Spleen (tissue), 13 donors: ENCODE measurements at regions of chr20 and their contacts with region 1.

Region 1: DNA sequence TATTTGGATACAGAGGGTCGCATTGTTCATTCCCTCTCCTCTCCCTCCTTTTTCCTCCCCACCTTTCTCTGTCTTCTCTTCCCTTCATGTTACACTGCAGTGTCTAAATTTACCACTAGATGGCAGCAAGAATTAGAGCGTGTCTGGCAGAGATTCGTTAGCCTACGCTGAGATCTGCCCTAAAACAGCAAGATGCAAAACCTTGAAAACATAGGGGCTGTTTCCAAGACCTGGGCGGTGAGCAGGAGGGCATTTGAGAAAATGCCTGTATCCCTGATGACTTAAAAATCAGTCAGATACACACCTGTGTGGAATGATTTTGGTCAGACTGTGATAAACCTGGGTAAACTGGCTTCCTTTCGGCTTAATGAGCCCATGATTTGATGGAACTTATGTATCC is 101.5 kb upstream of the ISM1 start:
- DNase-seq: no peak
- H3K4me3 ChIP-seq: no peak overlapping the region
- H3K27ac ChIP-seq: no peak overlapping the region
- H3K4me1 ChIP-seq: no peaks in the 10 kb centered on the region
- H3K27me3 ChIP-seq: no peaks in the 10 kb centered on the region
- CTCF ChIP-seq: peak; percentile 65 to 88 (median 80)
- POLR2A ChIP-seq: no peak

Region 2: DNA sequence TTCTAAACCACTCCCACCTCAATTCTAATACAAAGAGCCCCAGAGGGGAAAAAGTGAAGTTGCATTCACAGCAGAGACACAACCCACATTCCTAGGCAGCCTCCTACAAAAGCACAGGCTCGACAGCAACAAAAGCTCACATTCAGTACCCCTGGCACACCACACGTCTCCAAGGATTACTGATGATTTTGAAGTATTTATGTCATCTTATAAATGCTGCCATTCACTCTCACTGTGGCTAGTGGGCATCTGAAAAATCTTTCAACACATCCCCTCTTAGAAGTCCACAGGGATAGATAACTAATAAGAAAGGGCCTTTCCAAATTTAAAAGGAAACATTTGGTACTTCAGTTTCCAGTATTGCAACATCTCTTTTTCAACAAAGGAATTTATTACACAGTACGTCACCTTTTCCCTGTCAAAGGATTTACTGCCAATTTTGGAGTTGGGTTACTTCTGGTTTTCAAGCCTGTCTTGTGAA is 372.5 kb after region 1 on chr20:
- intact Hi-C with region 1: no loop called
- DNase-seq: no peak
- H3K4me3 ChIP-seq: no peak overlapping the region
- H3K27ac ChIP-seq: no peak overlapping the region
- H3K4me1 ChIP-seq: peaks cover 0 to 7% (median 0%) of the 10 kb centered on the region in 6 donors
- H3K27me3 ChIP-seq: no peaks in the 10 kb centered on the region
- CTCF ChIP-seq: no peak
- POLR2A ChIP-seq: no peak

Region 3: DNA sequence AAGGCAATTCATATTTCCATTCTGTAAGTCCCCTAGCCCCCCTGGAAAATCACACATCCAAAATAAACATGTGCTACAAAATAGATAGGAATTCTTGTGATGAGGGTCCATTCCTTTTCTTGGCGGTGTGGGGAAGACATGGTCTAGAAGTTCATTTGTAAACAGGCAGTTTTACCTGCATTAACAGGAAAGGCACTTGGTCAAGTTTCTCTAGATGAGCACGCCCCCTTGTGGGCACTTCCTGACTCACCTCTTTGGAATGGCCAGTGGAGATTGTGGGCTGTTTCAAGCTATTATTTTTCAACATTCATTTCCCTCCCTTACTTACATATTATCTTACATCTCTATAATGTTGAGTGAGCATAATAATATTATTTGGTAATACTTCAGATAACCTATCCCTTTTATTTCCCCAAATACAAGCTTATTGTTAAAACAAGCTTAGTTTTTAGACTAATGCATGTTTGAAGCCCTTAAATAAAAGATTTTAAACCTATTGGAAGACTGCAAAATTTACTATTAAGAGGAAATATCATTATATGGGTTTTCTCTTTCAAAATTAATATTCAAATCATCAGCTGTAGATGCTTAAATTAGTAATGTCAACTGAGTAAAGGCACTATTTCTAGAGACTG is 427.0 kb after region 1 on chr20:
- intact Hi-C with region 1: loop called (anchors 5 kb)
- DNase-seq: peak; percentile 86
- H3K4me3 ChIP-seq: no peak overlapping the region
- H3K27ac ChIP-seq: no peak overlapping the region
- H3K4me1 ChIP-seq: peaks cover 0 to 9% (median 0%) of the 10 kb centered on the region in 6 donors
- H3K27me3 ChIP-seq: no peaks in the 10 kb centered on the region
- CTCF ChIP-seq: peak; percentile 7 to 81 (median 68)
- POLR2A ChIP-seq: no peak

Region 4: DNA sequence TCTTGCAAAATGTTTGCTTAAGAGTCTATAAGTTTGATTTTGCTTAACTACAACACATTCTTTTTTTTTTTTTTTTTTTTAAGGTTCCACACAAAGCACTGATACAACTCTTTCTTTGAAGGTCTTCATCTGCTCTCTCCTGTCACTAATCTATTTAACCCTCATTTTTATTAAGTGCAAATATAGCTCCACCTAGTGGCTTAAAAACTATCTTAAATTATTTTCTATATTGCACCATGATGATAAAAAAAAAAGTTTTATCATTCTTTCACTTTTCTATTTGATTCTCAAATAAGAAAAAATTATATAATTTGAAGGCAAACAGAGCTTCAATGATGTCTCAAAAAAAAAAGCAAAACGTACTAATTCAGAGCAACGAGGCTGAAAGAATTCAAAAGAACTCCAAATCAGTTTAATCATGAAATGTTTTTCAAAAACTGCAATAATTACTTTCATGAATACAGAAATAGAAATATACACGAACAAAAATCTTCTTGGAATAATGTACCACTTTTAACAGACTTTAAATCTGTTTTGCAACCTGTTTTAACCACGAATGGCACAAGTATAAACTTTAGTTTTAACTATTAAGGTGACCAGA is 652.4 kb after region 1 on chr20:
- intact Hi-C with region 1: loop called (anchors 5 kb)
- DNase-seq: no peak
- H3K4me3 ChIP-seq: no peak overlapping the region
- H3K27ac ChIP-seq: no peak overlapping the region
- H3K4me1 ChIP-seq: peaks cover 0 to under 1% (median 0%) of the 10 kb centered on the region in 6 donors
- H3K27me3 ChIP-seq: no peaks in the 10 kb centered on the region
- CTCF ChIP-seq: peak in 8 of 11 experiments; percentile 20 to 55 (median 38)
- POLR2A ChIP-seq: no peak

Region 5: GRCh38 chr20:14055127-14055742 is 935.7 kb after region 1 on chr20:
- intact Hi-C with region 1: loop called (anchors 10 kb)
- DNase-seq: no peak
- H3K4me3 ChIP-seq: no peak overlapping the region
- H3K27ac ChIP-seq: no peak overlapping the region
- H3K4me1 ChIP-seq: no peaks in the 10 kb centered on the region
- H3K27me3 ChIP-seq: no peaks in the 10 kb centered on the region
- CTCF ChIP-seq: peak in 9 of 11 experiments; percentile 6 to 65 (median 57)
- POLR2A ChIP-seq: no peak